ENCODE measurements at regions of chr15 and their contacts with region 1.

Region 1: GRCh38 chr15:85831415-85832113 is 36.8 kb upstream of the KLHL25 start:
- DNase-seq: peak; percentile 47
- ATAC-seq: peak; percentile 95
- H3K4me3 ChIP-seq: no peak overlapping the region; a peak in 1 of 6 replicates
- H3K27ac ChIP-seq: no peak overlapping the region
- H3K4me1 ChIP-seq: peaks cover 11% of the 10 kb centered on the region
- H3K27me3 ChIP-seq: peaks cover 1 to 18% of the 10 kb centered on the region in 2 experiments; a peak in 4 of 5 replicates
- CTCF ChIP-seq: peak; percentile 85
- EP300 ChIP-seq: no peak
- POLR2A ChIP-seq: no peak
- RAD21 ChIP-seq: peak; percentile 68; the same call in 1 of the 2 replicates

Region 2: DNA sequence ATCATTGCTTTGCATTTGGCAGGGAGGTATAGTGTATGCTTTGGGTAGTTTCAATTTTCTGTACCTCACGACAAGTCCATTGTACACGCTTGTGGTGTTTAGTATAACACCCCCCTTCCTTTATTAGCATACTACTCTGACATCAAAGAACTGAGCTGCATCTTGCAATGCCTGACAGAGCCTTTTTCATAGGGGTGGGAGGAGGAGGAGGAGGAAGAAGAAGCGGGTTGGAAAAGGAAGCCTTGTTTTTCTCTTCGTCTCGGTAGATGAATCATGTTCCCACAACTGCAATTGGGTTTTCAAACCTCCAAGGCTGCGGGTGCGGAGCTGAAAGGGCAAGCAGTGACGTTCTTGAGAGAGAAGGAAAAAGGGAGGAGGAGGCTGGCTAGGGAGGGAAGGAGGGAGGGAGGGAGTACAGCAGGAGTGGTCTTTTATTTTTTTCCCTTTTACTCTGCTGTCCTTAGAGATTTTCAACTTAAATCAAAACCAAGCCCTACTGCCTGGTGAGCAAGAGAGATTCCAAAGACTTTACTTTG is 212.5 kb before region 1 on chr15:
- CTCF ChIA-PET with region 1: no interaction called
- POLR2A ChIA-PET with region 1: no interaction called
- in situ Hi-C with region 1: loop called (anchors 25 kb)
- intact Hi-C with region 1: loop called (anchors 10 kb)
- DNase-seq: no peak
- ATAC-seq: no peak
- H3K4me3 ChIP-seq: no peak overlapping the region
- H3K27ac ChIP-seq: no peak overlapping the region
- H3K4me1 ChIP-seq: peaks cover 22% of the 10 kb centered on the region
- H3K27me3 ChIP-seq: no peaks in the 10 kb centered on the region
- CTCF ChIP-seq: no peak
- EP300 ChIP-seq: no peak
- POLR2A ChIP-seq: no peak
- RAD21 ChIP-seq: no peak

Region 3: GRCh38 chr15:85730001-85730820 is 101.4 kb before region 1 on chr15:
- CTCF ChIA-PET with region 1: interaction called, 37 read pairs
- POLR2A ChIA-PET with region 1: no interaction called
- in situ Hi-C with region 1: loop called (anchors 5 kb)
- intact Hi-C with region 1: loop called (anchors 1 kb)
- DNase-seq: peak; percentile 53
- ATAC-seq: peak; percentile 86
- H3K4me3 ChIP-seq: no peak overlapping the region
- H3K27ac ChIP-seq: no peak overlapping the region
- H3K4me1 ChIP-seq: no peaks in the 10 kb centered on the region
- H3K27me3 ChIP-seq: no peaks in the 10 kb centered on the region
- CTCF ChIP-seq: peak; percentile 83
- EP300 ChIP-seq: no peak
- POLR2A ChIP-seq: no peak
- RAD21 ChIP-seq: peak; percentile 68

Region 4: DNA sequence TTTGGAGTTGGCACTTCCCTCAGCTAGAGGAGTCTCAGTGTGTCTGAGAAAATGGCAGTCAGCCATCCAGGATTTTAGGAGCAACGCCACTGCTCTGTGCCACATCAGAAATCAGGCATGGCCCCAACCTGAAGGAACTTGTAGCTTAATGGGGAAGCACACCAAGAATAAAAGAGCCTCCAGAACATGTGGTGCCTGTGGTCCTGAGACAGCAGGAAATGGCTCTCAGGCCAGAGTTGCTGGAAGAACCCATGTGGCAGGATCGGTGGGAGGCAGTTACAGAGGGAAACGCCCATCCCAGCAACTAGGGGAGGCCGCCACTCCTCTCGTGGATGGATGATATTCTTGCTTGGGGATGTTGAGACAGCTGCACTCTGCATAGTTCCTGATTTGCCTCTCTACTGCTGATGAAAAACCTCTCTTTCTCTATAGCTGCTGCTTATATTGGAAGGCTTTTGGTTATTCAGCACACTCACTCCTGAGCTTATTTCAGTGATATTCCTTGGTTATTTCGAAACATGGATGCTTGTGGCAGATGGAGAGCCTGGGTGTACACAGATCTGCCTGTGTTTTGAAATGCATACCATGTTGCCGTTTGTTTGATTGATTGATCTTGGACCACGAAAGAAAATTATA is 89.3 kb before region 1 on chr15:
- CTCF ChIA-PET with region 1: no interaction called
- POLR2A ChIA-PET with region 1: no interaction called
- in situ Hi-C with region 1: no loop called
- intact Hi-C with region 1: no loop called
- DNase-seq: no peak
- ATAC-seq: no peak
- H3K4me3 ChIP-seq: no peak overlapping the region
- H3K27ac ChIP-seq: no peak overlapping the region
- H3K4me1 ChIP-seq: no peaks in the 10 kb centered on the region
- H3K27me3 ChIP-seq: no peaks in the 10 kb centered on the region
- CTCF ChIP-seq: no peak
- EP300 ChIP-seq: no peak
- POLR2A ChIP-seq: no peak
- RAD21 ChIP-seq: no peak

Region 5: DNA sequence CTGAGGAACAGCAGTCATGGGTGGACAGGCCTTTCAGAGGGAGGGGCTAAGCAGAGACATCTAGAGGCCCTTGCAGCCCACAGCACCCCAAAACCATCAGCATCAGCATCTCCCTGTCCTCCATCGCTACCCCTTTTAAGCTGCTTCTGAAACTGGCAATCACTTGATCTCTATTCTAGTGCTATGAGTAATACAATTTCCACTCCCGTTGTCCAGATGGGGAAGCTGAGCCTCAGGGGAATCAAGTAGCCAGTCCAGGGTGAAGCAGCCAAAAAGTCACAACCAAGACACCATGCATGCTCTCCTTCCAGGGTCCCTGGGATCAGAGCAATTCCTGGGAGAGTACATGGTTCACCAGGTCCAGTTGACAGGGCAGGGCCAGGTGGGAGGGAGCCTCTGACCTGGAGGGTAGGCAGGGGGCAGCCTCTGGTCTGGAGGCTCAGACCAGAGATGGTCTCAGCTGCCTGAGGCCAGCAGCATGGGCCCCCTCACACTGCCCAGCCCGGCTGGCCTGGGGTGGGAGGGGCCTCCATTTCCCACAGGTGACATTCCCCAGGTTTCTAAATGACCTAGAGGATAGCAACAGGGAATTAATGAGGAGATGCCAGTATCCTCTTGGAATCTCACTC is 66.8 kb before region 1 on chr15:
- CTCF ChIA-PET with region 1: no interaction called
- POLR2A ChIA-PET with region 1: no interaction called
- in situ Hi-C with region 1: no loop called
- intact Hi-C with region 1: no loop called
- DNase-seq: no peak
- ATAC-seq: no peak
- H3K4me3 ChIP-seq: no peak overlapping the region
- H3K27ac ChIP-seq: no peak overlapping the region
- H3K4me1 ChIP-seq: peaks cover 19% of the 10 kb centered on the region
- H3K27me3 ChIP-seq: no peaks in the 10 kb centered on the region
- CTCF ChIP-seq: no peak
- EP300 ChIP-seq: no peak
- POLR2A ChIP-seq: no peak
- RAD21 ChIP-seq: no peak

Region 6: GRCh38 chr15:85871545-85871944 is 40.0 kb after region 1 on chr15:
- CTCF ChIA-PET with region 1: no interaction called
- POLR2A ChIA-PET with region 1: no interaction called
- in situ Hi-C with region 1: no loop called
- intact Hi-C with region 1: no loop called
- DNase-seq: no peak
- ATAC-seq: no peak
- H3K4me3 ChIP-seq: no peak overlapping the region
- H3K27ac ChIP-seq: no peak overlapping the region
- H3K4me1 ChIP-seq: no peaks in the 10 kb centered on the region
- H3K27me3 ChIP-seq: peaks cover 0 to 2% of the 10 kb centered on the region in 2 experiments; a peak in 1 of 5 replicates
- CTCF ChIP-seq: no peak
- EP300 ChIP-seq: no peak
- POLR2A ChIP-seq: no peak
- RAD21 ChIP-seq: no peak

Region 7: DNA sequence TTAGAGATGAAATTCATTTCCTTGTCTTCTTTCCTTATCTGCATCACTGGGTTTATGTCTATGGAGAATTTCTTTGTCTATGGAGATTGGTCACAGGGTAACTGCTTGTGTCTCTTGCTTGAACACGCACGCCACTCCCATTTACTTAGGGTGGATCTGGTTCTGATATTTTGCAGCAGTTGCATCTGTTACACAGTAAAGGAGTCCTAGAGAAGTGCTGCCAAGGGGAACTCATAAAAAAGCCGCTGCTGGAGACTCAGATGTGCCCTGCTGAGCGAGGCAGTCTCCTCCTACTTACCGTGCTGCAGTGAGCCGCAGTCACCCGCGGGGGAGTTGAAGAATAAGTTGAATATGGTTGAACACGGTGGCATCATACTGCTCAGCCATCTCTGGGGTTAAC is 68.4 kb after region 1 on chr15:
- CTCF ChIA-PET with region 1: no interaction called
- POLR2A ChIA-PET with region 1: no interaction called
- in situ Hi-C with region 1: no loop called
- intact Hi-C with region 1: no loop called
- DNase-seq: no peak
- ATAC-seq: no peak
- H3K4me3 ChIP-seq: no peak overlapping the region
- H3K27ac ChIP-seq: no peak overlapping the region
- H3K4me1 ChIP-seq: no peaks in the 10 kb centered on the region
- H3K27me3 ChIP-seq: no peaks in the 10 kb centered on the region
- CTCF ChIP-seq: no peak
- EP300 ChIP-seq: no peak
- POLR2A ChIP-seq: no peak
- RAD21 ChIP-seq: no peak